Activated CD4-positive, alpha-beta memory T cell treated with anti-CD3 and anti-CD28 coated beads, Interleukin-2, amount 10 ng/mL, durations not matched to agents 7 days and 5 days (primary cell): ENCODE measurements at regions of chr19 and their contacts with region 1.

Region 1: DNA sequence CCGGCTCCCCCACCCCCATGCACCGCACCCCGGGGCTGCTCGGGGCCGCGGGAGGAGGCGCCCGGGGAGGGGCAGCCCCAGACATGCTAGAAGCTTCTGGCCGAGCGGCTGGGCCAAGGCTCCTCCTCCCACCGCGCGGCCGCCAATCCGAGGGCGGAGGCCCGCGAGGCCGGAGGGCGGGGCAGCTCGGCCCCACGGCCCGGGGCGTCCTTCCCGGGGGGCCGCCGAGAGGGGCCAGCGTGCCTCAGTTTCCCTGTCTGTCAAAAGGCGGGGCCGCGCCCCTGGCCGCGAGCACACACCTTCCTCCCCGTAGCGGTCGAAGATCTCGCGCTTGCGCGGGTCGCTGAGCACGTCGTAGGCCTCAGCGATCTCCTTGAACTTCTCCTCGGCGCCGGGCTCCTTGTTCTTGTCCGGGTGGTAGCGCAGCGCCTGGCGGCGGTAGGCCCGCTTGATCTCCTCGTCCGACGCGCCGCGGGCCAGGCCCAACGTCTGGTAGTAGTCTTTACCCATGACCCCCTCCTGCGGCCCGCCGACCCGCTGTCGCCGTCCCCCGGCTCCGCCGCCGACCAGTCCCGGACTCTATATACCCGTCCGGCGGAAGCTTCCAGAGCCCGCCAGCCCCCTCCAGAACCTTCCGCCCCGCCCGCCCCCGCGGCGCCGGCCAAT is at the start of gene DNAJB1:
- DNase-seq: peak; percentile 79
- H3K4me3 Mint-ChIP-seq: peak within 1 kb of the TSS; percentile 79
- H3K27ac Mint-ChIP-seq: peak within 1 kb of the TSS; percentile 93
- H3K4me1 Mint-ChIP-seq: peaks cover 64% of the 10 kb centered on the region
- H3K27me3 Mint-ChIP-seq: no peaks in the 10 kb centered on the region
- total RNA-seq, gene DNAJB1: 108 to 114 TPM

Region 2: DNA sequence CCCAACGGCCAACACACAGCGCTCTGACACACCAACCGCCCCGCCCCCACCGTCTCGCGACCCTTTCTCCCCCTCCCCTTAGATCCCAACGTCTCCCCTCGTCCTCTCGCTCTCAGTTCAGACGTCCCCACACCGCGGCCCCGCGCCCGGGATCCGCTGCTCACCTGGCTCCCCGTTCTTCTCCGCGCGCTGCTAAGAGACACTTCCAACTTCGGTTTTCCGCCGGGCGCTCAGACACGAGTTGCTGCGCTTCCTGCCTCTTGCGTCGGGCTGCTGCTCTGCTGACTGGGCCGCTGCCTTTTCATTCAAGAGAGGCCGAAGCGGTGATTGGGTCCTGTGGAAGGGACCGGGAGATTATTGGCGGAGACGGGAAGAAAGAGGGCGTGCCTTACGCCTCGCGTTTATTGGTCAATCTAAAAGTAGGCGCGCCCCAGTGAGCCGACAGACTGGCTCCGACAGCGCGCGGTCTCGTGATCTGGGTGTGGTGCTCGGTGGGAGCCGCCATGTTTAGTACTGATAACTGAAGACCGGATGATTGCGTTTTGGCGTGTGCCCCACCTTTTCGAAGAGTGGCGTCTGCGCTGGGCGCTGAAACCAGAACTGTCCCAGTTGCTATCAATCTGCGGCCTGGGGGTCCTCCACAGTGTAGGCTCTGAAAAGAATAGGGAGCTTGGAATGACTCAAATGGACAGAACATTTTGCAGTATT is 98.7 kb before region 1 on chr19 and contains the start of gene DDX39A:
- CTCF ChIA-PET with region 1: no interaction called
- POLR2A ChIA-PET with region 1: interaction called, 17 read pairs
- DNase-seq: peak; percentile 99
- H3K4me3 Mint-ChIP-seq: peak within 1 kb of the TSS; percentile 88
- H3K27ac Mint-ChIP-seq: peak within 1 kb of the TSS; percentile 96
- H3K4me1 Mint-ChIP-seq: peaks cover 34% of the 10 kb centered on the region
- H3K27me3 Mint-ChIP-seq: no peaks in the 10 kb centered on the region
- total RNA-seq, gene DDX39A: 233 to 234 TPM

Region 3: GRCh38 chr19:14496028-14496833 is 21.7 kb before region 1 on chr19 and contains the start of gene GIPC1:
- CTCF ChIA-PET with region 1: interaction called, 3 read pairs
- POLR2A ChIA-PET with region 1: interaction called, 316 read pairs
- DNase-seq: peak; percentile 84
- H3K4me3 Mint-ChIP-seq: peak within 1 kb of the TSS; percentile 82
- H3K27ac Mint-ChIP-seq: peak within 1 kb of the TSS; percentile 74
- H3K4me1 Mint-ChIP-seq: peaks cover 25% of the 10 kb centered on the region
- H3K27me3 Mint-ChIP-seq: peaks cover 3% of the 10 kb centered on the region
- total RNA-seq, gene GIPC1: 39.8 to 40.0 TPM

Region 4: GRCh38 chr19:14505488-14506432 is 12.2 kb before region 1 on chr19:
- CTCF ChIA-PET with region 1: interaction called, 39 read pairs
- POLR2A ChIA-PET with region 1: interaction called, 316 read pairs
- DNase-seq: peak; percentile 79
- H3K4me3 Mint-ChIP-seq: no peak overlapping the region
- H3K27ac Mint-ChIP-seq: peak overlapping the region; percentile 57
- H3K4me1 Mint-ChIP-seq: peaks cover 44% of the 10 kb centered on the region
- H3K27me3 Mint-ChIP-seq: peaks cover 2% of the 10 kb centered on the region

Region 5: DNA sequence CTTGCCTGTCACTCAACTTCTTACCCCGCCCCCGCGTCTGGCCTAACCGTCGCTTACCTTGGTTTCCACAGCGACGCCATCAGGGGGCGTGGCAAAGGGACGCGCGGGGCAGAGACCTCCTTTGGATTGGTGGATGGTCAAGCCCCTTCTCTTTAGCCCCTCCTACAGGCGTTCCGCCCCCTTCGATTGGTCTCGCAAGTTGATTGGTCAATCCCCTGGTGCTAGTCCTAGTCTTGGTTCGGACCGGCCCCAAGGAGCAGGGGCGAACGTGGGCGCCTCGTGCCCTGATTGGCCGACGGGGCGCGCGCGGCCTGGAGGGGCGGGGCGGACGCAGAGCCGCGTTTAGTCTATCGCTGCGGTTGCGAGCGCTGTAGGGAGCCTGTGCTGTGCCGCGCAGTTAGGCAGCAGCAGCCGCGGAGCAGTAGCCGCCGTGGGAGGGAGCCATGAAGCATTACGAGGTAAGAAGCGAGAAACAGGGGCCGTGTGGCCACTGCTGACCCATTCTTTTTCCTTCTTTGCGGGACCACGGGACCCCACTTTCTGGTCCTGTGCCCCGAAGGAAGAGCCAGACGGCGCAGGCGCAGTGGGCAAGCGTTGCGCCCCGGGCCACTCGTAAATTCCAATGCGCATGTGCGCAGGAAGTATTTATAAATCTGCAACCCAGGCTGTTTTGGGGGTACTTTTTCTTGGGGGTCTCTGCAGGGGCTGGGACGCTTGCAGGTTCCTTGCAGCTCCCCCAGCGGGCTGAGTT is 11.5 kb after region 1 on chr19 and contains the start of gene TECR:
- CTCF ChIA-PET with region 1: interaction called, 4 read pairs
- POLR2A ChIA-PET with region 1: interaction called, 84 read pairs
- DNase-seq: peak; percentile 100
- H3K4me3 Mint-ChIP-seq: peak within 1 kb of the TSS; percentile 95
- H3K27ac Mint-ChIP-seq: peak within 1 kb of the TSS; percentile 91
- H3K4me1 Mint-ChIP-seq: peaks cover 30% of the 10 kb centered on the region
- H3K27me3 Mint-ChIP-seq: no peaks in the 10 kb centered on the region
- total RNA-seq, gene TECR: 171 to 178 TPM

Region 6: DNA sequence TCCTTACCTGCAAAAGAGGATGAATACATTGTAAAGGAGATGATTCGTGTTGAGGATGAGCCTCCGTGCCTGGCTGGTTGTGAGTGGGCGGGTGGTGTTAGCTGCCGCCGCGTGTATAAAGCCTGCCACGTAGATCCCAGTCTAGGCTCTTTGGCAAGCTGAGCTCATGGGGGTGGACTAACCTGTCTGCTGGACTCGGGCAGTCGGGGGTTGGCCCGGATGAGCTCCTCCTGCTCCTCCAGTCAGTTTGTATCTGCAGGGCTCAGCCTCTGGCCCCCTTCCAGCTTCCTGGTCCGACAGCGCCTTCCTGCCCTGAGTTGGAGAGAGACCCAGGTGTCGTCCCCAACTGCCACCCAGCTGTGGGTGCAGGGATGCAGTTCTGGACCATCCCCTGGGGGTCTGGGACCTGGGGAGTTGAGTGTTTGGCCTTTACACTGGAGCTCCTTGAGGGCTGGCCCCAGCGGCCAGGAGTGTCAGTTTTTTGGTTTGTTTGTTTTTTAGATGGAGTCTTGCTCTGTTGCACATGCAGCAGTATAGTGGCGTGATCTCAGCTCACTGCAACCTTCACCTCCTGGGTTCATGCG is 32.3 kb after region 1 on chr19:
- CTCF ChIA-PET with region 1: interaction called, 3 read pairs
- POLR2A ChIA-PET with region 1: interaction called, 16 read pairs
- DNase-seq: no peak
- H3K4me3 Mint-ChIP-seq: no peak overlapping the region
- H3K27ac Mint-ChIP-seq: no peak overlapping the region
- H3K4me1 Mint-ChIP-seq: peaks cover 18% of the 10 kb centered on the region
- H3K27me3 Mint-ChIP-seq: no peaks in the 10 kb centered on the region